ENCODE measurements at regions of chr16 and their contacts with region 1.

Region 1: DNA sequence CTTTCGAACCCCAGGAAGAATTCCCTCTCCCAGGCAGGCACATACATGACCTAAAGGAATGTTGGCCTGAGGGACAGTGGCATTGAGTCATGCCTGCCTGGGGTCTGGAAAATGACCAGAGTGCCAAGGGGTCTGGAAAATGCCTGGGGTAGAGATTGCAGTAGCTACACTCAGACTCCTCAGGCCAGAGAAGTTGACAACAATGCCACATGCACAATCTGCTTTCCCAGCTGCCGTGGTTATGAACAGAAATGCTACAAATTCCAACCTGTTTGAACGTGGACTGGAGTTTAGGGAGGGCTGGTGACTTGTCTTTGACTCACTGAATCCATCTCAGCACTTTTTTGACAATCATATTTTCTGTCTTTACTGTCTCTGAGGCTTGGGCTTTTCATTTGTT is 250.0 kb downstream of the ABCC12 start:
- DNase-seq: no peak
- ATAC-seq: no peak
- H3K4me3 ChIP-seq: no peak overlapping the region
- H3K27ac ChIP-seq: no peak overlapping the region
- H3K4me1 ChIP-seq: no peaks in the 10 kb centered on the region
- H3K27me3 ChIP-seq: no peaks in the 10 kb centered on the region
- CTCF ChIP-seq: no peak
- POLR2A ChIP-seq: no peak

Region 2: DNA sequence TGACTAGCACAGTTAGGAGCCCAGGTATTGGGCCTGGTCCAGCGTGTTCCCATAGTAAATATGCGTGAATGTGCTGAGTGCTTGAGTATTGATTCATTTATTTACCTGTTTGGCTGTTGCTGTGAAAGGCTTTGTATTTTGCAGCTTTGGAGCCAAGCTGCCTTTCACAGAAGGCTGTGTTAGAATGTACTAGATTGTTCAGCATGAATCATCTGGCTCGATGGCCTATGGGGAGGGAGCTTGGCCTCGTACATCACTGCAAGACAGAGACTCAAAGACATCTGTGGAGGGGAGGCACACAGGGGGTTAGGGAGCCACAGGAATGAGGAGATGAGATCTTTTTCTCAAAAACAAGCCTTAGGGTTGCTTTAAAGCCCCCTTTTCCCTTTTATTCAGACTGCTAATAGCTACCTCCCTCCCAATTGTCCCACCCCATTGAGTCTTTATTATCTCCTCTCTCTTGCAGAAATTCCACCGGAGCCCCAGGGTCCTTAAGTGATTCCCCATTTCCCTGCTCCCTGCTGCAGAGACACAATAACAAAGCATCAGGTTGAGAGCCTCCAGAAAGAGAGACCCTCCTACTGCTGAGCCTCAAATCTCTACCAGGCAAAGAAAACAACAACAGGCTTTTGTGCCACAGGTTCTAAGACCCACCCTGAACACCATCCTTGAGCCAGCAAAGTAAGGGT is 57.2 kb before region 1 on chr16:
- intact Hi-C with region 1: loop called in 1 of 10 experiments (anchors 10 kb)
- DNase-seq: no peak
- ATAC-seq: no peak
- H3K4me3 ChIP-seq: no peak overlapping the region
- H3K27ac ChIP-seq: no peak overlapping the region
- H3K4me1 ChIP-seq: no peaks in the 10 kb centered on the region
- H3K27me3 ChIP-seq: no peaks in the 10 kb centered on the region
- CTCF ChIP-seq: no peak
- POLR2A ChIP-seq: no peak

Region 3: GRCh38 chr16:48091117-48091516 is 185.3 kb after region 1 on chr16:
- intact Hi-C with region 1: no loop called
- DNase-seq: no peak
- ATAC-seq: no peak
- H3K4me3 ChIP-seq: no peak overlapping the region
- H3K27ac ChIP-seq: no peak overlapping the region
- H3K4me1 ChIP-seq: peaks cover 0 to 20% (median 12%) of the 10 kb centered on the region in 12 donors
- H3K27me3 ChIP-seq: no peaks in the 10 kb centered on the region
- CTCF ChIP-seq: no peak
- POLR2A ChIP-seq: no peak

Measured in heart left ventricle (tissue), 16 donors.